ENCODE measurements at regions of chr2 and their contacts with region 1.

Region 1: GRCh38 chr2:136025057-136025973 is 39.9 kb upstream of the DARS1 start:
- DNase-seq: peak; percentile 76 to 95 (median 89)

Region 2: GRCh38 chr2:136117909-136118818 is 92.8 kb after region 1 on chr2 and contains the start of gene CXCR4:
- intact Hi-C with region 1: loop called (anchors 10 kb)
- DNase-seq: peak; percentile 35 to 86 (median 69)

Measured in head of caudate nucleus (tissue), 42 donors.